Natural killer cell (primary cell): ENCODE measurements at regions of chr12 and their contacts with region 1.

Region 1: GRCh38 chr12:105382771-105383622 is 52.5 kb downstream of the C12orf75 start:
- DNase-seq: peak in 1 of 2 donors; percentile 79
- ATAC-seq: peak; percentile 71 to 86 (median 81)
- H3K4me3 ChIP-seq: no peak overlapping the region
- H3K4me3 Mint-ChIP-seq: no peak overlapping the region
- H3K27ac ChIP-seq: no peak overlapping the region
- H3K27ac Mint-ChIP-seq: no peak overlapping the region
- H3K4me1 ChIP-seq: peaks cover 4% of the 10 kb centered on the region
- H3K4me1 Mint-ChIP-seq: no peaks in the 10 kb centered on the region
- H3K27me3 ChIP-seq: no peaks in the 10 kb centered on the region
- H3K27me3 Mint-ChIP-seq: no peaks in the 10 kb centered on the region
- CTCF ChIP-seq: peak; percentile 88

Region 2: GRCh38 chr12:104166465-104166864 is 1216.5 kb before region 1 on chr12:
- intact Hi-C with region 1: no loop called
- DNase-seq: no peak
- ATAC-seq: no peak
- H3K4me3 ChIP-seq: no peak overlapping the region
- H3K4me3 Mint-ChIP-seq: no peak overlapping the region
- H3K27ac ChIP-seq: no peak overlapping the region
- H3K27ac Mint-ChIP-seq: no peak overlapping the region
- H3K4me1 ChIP-seq: no peaks in the 10 kb centered on the region
- H3K4me1 Mint-ChIP-seq: no peaks in the 10 kb centered on the region
- H3K27me3 ChIP-seq: no peaks in the 10 kb centered on the region
- H3K27me3 Mint-ChIP-seq: peaks cover 0 to 2% of the 10 kb centered on the region in 2 donors
- CTCF ChIP-seq: no peak

Region 3: DNA sequence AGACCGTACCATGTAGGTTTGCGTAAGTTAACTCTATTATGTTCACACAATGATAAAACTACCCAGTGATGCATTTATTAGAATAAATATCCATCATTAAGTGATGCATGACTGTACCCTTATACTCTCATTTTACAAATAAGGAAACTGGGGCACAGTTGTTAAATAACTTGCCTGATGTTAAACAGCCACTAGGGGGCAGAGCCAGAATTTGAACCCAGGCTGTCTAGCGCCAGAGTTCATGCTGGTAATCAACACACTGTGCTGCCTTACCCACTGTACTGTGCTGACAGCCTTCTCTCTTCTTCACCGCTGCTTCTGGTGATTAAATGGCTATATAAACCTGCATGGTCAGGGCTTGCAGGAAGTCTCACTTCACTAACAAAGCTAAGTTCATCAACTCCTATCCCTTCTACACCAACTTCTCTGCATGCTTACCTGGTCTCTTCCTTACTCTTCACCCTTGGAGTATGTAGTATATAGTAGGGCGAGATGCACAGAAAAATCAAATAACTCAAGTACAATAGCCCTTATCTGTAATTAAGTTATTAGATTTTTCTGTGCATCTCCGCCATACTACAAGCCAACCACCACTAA is 103.4 kb before region 1 on chr12:
- intact Hi-C with region 1: loop called (anchors 1 kb)
- DNase-seq: peak; percentile 25 to 67
- ATAC-seq: peak; percentile 59 to 80 (median 80)
- H3K4me3 ChIP-seq: no peak overlapping the region
- H3K4me3 Mint-ChIP-seq: no peak overlapping the region
- H3K27ac ChIP-seq: no peak overlapping the region
- H3K27ac Mint-ChIP-seq: no peak overlapping the region
- H3K4me1 ChIP-seq: no peaks in the 10 kb centered on the region
- H3K4me1 Mint-ChIP-seq: peaks cover 0 to 10% of the 10 kb centered on the region in 2 donors
- H3K27me3 ChIP-seq: no peaks in the 10 kb centered on the region
- H3K27me3 Mint-ChIP-seq: peaks cover 10 to 13% of the 10 kb centered on the region in 2 donors
- CTCF ChIP-seq: peak; percentile 70

Region 4: GRCh38 chr12:105319691-105320209 is 63.2 kb before region 1 on chr12:
- intact Hi-C with region 1: loop called (anchors 2 kb)
- DNase-seq: peak in 1 of 2 donors; percentile 64
- ATAC-seq: peak in 2 of 3 donors; percentile 54 to 65
- H3K4me3 ChIP-seq: no peak overlapping the region
- H3K4me3 Mint-ChIP-seq: no peak overlapping the region
- H3K27ac ChIP-seq: no peak overlapping the region
- H3K27ac Mint-ChIP-seq: peak overlapping the region in 1 of 2 donors; percentile 30
- H3K4me1 ChIP-seq: no peaks in the 10 kb centered on the region
- H3K4me1 Mint-ChIP-seq: peaks cover 39 to 42% of the 10 kb centered on the region in 2 donors
- H3K27me3 ChIP-seq: no peaks in the 10 kb centered on the region
- H3K27me3 Mint-ChIP-seq: peaks cover 0 to 3% of the 10 kb centered on the region in 2 donors
- CTCF ChIP-seq: no peak